Sigmoid colon (tissue), 7 donors: ENCODE measurements at regions of chr2 and their contacts with region 1.

Region 1: DNA sequence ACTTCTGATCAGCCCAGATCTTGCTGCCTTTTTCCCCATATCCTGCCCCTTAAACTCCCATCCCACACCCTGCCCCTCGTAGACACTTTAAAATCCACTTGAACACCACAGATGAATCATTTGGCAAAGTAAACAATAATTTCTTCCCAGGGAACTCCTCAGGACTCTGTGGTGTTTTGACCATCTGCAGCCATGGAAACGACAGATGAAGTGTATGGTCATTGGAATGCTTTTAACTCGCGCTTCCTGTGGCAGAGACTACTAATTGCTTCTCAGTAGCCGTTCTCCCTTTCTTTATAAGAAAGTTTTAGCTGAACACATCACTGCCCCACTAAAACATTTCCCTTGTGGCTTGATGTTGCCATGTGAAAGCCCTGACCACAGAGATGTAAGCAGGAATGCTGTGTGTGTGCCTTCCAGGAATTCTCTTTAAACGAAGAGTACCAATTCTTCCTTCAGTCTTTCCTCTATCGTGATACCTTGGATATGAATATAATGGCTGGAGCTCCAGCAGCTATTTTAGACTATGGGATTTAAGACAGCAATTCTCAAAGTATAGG is 92.7 kb upstream of the PARD3B start:
- DNase-seq: peak; percentile 79
- H3K4me3 ChIP-seq: no peak overlapping the region
- H3K27ac ChIP-seq: peak overlapping the region; percentile 78 to 90 (median 86)
- H3K4me1 ChIP-seq: peaks cover 0 to 81% (median 64%) of the 10 kb centered on the region in 4 donors
- H3K27me3 ChIP-seq: no peaks in the 10 kb centered on the region
- CTCF ChIP-seq: peak in 1 of 4 experiments; percentile 9
- EP300 ChIP-seq: peak in 1 of 4 donors; percentile 19
- POLR2A ChIP-seq: no peak

Region 2: DNA sequence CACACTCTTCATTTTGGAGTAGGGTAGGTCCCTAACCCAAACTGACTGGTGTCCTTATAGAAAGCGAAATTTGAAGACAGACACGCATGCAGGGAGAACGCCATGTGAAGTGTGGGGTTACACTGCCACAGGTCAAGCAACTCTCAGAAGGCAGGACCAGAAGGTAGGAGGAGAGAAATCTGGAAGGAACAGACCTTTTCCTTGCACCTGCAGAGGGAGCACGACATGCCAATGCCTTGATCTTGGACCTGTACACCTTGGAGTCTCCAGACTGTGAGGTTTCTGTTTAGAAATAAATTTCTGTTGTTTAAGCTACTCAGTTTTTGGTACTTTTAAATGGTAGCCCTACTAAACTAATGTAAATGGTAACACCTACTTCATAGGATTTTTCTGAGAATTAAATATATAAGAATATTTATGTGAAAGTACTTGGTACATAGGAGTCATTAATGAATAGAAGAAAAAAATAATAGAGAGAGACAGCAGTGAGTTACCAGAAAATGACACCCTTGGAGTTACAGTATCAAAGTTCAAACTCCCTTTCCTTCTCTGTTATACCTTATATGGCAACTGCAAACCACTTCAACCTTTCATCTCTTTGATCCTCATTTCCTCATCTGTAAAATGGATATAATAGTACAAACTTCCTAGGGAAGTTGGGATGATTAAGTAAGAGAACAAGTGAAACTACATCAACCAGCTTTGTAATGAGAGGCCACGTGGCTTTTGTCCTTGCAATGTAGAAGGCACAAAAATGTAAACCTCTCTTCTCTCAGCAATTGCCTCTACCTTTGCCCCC is 92.1 kb before region 1 on chr2:
- intact Hi-C with region 1: loop called (anchors 5 kb)
- DNase-seq: no peak
- H3K4me3 ChIP-seq: no peak overlapping the region
- H3K27ac ChIP-seq: no peak overlapping the region
- H3K4me1 ChIP-seq: peaks cover 0 to 17% (median 12%) of the 10 kb centered on the region in 4 donors
- H3K27me3 ChIP-seq: no peaks in the 10 kb centered on the region
- CTCF ChIP-seq: no peak
- EP300 ChIP-seq: no peak
- POLR2A ChIP-seq: no peak

Region 3: GRCh38 chr2:204545023-204545860 is 92.7 kb after region 1 on chr2 and contains the start of gene PARD3B:
- intact Hi-C with region 1: loop called (anchors 5 kb)
- DNase-seq: peak; percentile 78
- H3K4me3 ChIP-seq: peak within 1 kb of the TSS; percentile 93 to 99 (median 96)
- H3K27ac ChIP-seq: peak within 1 kb of the TSS; percentile 93 to 95 (median 94)
- H3K4me1 ChIP-seq: peaks cover 0 to 46% (median 33%) of the 10 kb centered on the region in 4 donors
- H3K27me3 ChIP-seq: no peaks in the 10 kb centered on the region
- CTCF ChIP-seq: no peak
- EP300 ChIP-seq: no peak
- POLR2A ChIP-seq: no peak
- total RNA-seq, gene PARD3B: 42.5 to 64.0 (median 52.7) TPM

Region 4: GRCh38 chr2:204561749-204562148 is 109.2 kb after region 1 on chr2:
- intact Hi-C with region 1: no loop called
- DNase-seq: no peak
- H3K4me3 ChIP-seq: no peak overlapping the region
- H3K27ac ChIP-seq: peak overlapping the region in 3 of 4 donors; percentile 39 to 74 (median 54)
- H3K4me1 ChIP-seq: peaks cover 0 to 16% (median 9%) of the 10 kb centered on the region in 4 donors
- H3K27me3 ChIP-seq: no peaks in the 10 kb centered on the region
- CTCF ChIP-seq: no peak
- EP300 ChIP-seq: no peak
- POLR2A ChIP-seq: no peak

Region 5: GRCh38 chr2:204608237-204608939 is 155.8 kb after region 1 on chr2:
- intact Hi-C with region 1: no loop called
- DNase-seq: no peak
- H3K4me3 ChIP-seq: no peak overlapping the region
- H3K27ac ChIP-seq: peak overlapping the region in 3 of 4 donors; percentile 58 to 68 (median 65)
- H3K4me1 ChIP-seq: peaks cover 0 to 92% (median 81%) of the 10 kb centered on the region in 4 donors
- H3K27me3 ChIP-seq: no peaks in the 10 kb centered on the region
- CTCF ChIP-seq: no peak
- EP300 ChIP-seq: no peak
- POLR2A ChIP-seq: no peak

Region 6: GRCh38 chr2:204691911-204692510 is 239.5 kb after region 1 on chr2:
- intact Hi-C with region 1: loop called (anchors 2 kb)
- DNase-seq: peak; percentile 75
- H3K4me3 ChIP-seq: no peak overlapping the region
- H3K27ac ChIP-seq: peak overlapping the region in 2 of 4 donors; percentile 3 to 8
- H3K4me1 ChIP-seq: peaks cover 0 to 56% (median 35%) of the 10 kb centered on the region in 4 donors
- H3K27me3 ChIP-seq: no peaks in the 10 kb centered on the region
- CTCF ChIP-seq: peak; percentile 47 to 74 (median 64)
- EP300 ChIP-seq: peak in 1 of 4 donors; percentile 28
- POLR2A ChIP-seq: no peak